Ovary (tissue), 10 donors: ENCODE measurements at regions of chr10 and their contacts with region 1.

Region 1: GRCh38 chr10:44386546-44387052 is 1.7 kb upstream of the CXCL12 start:
- DNase-seq: peak; percentile 49 to 84 (median 77)
- H3K4me3 ChIP-seq: no peak overlapping the region
- H3K27ac ChIP-seq: no peak overlapping the region
- H3K4me1 ChIP-seq: peaks cover 6% of the 10 kb centered on the region
- H3K27me3 ChIP-seq: no peaks in the 10 kb centered on the region
- CTCF ChIP-seq: peak; percentile 79 to 89 (median 87)
- EP300 ChIP-seq: no peak
- POLR2A ChIP-seq: no peak

Region 2: DNA sequence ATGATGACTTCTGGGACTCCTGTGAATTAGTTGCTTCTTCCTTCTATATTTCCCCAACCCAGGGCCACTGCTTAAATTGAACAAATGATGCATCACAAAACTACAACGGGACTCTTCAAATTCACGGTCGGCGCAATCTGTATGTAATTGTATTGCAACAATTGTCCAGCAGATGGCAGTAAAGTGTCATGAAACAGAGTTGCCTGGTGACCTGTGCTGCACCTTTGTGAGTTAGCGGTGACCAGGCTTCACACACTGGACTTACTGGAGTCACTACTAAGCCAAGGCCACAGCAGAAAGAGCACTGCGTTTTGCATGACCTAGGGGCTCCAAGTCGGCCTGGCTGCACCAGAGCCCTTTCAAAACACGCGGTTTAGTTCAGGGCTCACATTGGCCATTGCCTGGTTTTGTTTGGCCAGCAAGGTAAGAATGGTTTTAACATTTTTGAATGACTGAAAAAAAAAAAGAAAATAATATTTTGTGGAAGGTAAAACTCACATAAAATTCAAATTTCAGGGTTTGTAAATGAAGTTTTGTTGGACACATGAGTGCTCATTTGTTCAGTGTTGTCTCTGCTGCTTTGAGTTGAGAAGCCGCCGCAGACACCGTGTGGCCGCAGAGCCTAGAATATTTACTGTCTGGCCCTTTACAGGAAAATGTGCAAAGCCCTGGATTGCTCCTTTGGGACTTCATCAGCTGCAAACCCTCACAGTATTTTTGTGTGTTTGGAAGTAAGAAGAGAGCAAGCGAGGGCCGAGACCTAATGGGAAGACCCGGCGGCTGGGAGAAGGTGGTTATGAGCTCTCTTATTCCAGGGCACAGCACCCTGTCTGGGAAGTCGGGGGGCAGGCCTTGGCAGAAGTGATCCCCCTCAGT is 714.7 kb before region 1 on chr10:
- intact Hi-C with region 1: loop called (anchors 2 to 5 kb)
- DNase-seq: peak; percentile 40 to 60 (median 53)
- H3K4me3 ChIP-seq: no peak overlapping the region
- H3K27ac ChIP-seq: no peak overlapping the region
- H3K4me1 ChIP-seq: no peaks in the 10 kb centered on the region
- H3K27me3 ChIP-seq: no peaks in the 10 kb centered on the region
- CTCF ChIP-seq: peak; percentile 44 to 89 (median 80)
- EP300 ChIP-seq: no peak
- POLR2A ChIP-seq: no peak

Region 3: GRCh38 chr10:43689955-43690771 is 696.4 kb before region 1 on chr10:
- intact Hi-C with region 1: loop called in 3 of 4 experiments (anchors 1 to 5 kb)
- DNase-seq: peak; percentile 79 to 94 (median 90)
- H3K4me3 ChIP-seq: peak overlapping the region; percentile 41
- H3K27ac ChIP-seq: peak overlapping the region; percentile 48 to 51
- H3K4me1 ChIP-seq: peaks cover 10% of the 10 kb centered on the region
- H3K27me3 ChIP-seq: no peaks in the 10 kb centered on the region
- CTCF ChIP-seq: peak; percentile 88 to 91 (median 91)
- EP300 ChIP-seq: no peak
- POLR2A ChIP-seq: peak; percentile 25

Region 4: GRCh38 chr10:44857363-44858016 is 470.9 kb after region 1 on chr10:
- intact Hi-C with region 1: loop called (anchors 5 to 10 kb)
- DNase-seq: peak; percentile 62 to 86 (median 84)
- H3K4me3 ChIP-seq: no peak overlapping the region
- H3K27ac ChIP-seq: peak overlapping the region in 1 of 2 donors; percentile 16
- H3K4me1 ChIP-seq: peaks cover 2% of the 10 kb centered on the region
- H3K27me3 ChIP-seq: no peaks in the 10 kb centered on the region
- CTCF ChIP-seq: peak; percentile 89 to 98 (median 91)
- EP300 ChIP-seq: no peak
- POLR2A ChIP-seq: no peak

Region 5: DNA sequence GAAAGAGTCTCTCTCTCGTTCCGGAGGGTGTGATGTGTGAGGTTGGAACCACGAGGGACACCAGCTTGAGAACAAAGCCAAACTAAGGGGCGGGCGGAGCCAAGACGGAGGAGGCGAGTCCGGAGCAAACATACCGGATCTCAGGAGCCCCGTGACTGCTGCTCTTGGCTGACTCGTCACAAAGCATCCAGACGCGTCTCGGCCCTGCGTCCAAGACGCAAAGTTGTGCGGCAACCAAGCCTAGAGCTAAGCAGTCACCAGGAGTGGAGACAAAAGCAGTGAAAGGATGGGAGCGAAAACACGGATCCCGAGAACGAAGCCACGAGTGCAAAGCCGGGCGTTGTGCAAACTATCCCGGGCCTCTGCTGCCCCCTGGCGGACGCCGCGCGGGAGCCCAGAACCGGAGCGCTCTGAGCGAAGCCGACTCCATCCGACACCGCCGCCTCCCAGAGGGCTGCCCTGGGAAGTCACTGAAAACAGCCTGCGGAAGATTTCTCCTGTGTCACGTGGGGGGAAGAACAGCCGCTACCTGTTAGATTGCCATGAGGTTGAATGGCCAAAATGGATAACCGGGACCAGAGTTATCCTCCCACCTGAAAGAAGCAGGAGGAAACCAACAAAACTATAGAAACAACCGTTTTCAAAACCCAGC is 478.2 kb after region 1 on chr10:
- intact Hi-C with region 1: loop called (anchors 5 to 10 kb)
- DNase-seq: peak; percentile 88 to 96 (median 95)
- H3K4me3 ChIP-seq: peak overlapping the region; percentile 37
- H3K27ac ChIP-seq: peak overlapping the region in 1 of 2 donors; percentile 76
- H3K4me1 ChIP-seq: peaks cover 3% of the 10 kb centered on the region
- H3K27me3 ChIP-seq: no peaks in the 10 kb centered on the region
- CTCF ChIP-seq: peak; percentile 94 to 97 (median 97)
- EP300 ChIP-seq: no peak
- POLR2A ChIP-seq: no peak

Region 6: GRCh38 chr10:45058580-45058979 is 672.0 kb after region 1 on chr10:
- intact Hi-C with region 1: no loop called
- DNase-seq: no peak
- H3K4me3 ChIP-seq: no peak overlapping the region
- H3K27ac ChIP-seq: no peak overlapping the region
- H3K4me1 ChIP-seq: no peaks in the 10 kb centered on the region
- H3K27me3 ChIP-seq: no peaks in the 10 kb centered on the region
- CTCF ChIP-seq: no peak
- EP300 ChIP-seq: no peak
- POLR2A ChIP-seq: no peak